ENCODE measurements at regions of chr11 and their contacts with region 1.

Region 1: DNA sequence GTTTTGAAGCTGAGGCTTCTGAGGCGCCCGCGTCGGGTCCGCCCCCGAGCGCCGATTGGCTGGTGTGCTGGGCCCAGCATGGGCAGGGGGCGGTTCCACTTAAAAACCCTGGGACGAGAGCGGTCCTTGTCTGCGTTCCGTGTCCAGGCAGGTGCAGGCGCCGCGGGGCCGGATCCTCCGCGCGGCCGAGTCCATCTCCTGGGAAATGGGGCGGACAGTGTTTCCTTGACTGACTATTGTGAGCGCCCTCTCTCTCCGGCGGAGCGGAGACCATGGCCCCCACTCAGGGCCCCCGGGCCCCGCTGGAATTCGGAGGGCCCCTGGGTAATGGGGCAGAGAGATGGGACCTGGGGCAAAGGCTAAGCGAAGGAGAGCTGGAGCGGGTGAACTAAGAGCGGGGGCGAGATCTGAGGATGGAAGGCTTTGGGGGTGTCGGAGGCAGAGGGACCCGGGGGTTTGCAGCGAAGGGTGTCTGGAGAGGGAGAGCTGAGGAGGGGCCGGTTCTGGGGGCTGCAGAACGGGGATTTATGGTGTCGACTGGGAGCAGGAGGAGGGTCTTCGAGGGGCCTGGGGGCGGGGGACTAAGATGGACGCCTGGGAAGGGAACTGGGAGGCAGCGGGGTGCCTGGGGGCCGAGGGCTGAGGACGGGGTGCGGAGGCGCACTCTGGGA is at the start of gene TM7SF2:
- DNase-seq: peak; percentile 98
- H3K4me3 ChIP-seq: peak within 1 kb of the TSS; percentile 64 to 83
- H3K27ac ChIP-seq: peak within 1 kb of the TSS in 1 of 2 experiments; percentile 89; a peak in 2 of 4 replicates
- H3K4me1 ChIP-seq: peaks cover 14 to 52% of the 10 kb centered on the region in 2 experiments; a peak in 3 of 4 replicates
- H3K27me3 ChIP-seq: no peaks in the 10 kb centered on the region
- CTCF ChIP-seq: no peak
- EP300 ChIP-seq: no peak
- RAD21 ChIP-seq: no peak
- polyA plus RNA-seq, gene TM7SF2: 87.8 and 90.0 TPM in 2 replicates

Region 2: DNA sequence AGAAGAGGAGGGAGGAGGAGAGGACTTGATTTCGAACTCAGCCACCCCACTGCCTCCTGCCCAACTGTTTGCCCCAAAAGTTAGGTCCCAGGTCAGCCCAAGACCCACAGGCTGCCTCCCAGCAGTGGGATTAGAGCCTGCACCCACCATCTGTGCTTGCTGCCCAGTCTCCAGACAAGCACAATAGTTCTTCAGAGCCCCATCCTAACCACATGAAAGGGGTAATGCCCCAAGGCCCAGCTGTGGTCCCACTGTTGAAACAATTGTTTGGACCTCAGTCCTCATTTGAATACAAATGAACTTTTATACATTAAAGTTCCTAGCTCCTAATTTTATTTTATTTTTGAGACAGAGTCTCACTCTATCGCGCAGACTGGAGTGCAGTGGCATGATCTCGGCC is 21.3 kb before region 1 on chr11:
- CTCF ChIA-PET with region 1: interaction called, 150 read pairs
- POLR2A ChIA-PET with region 1: interaction called, 10 read pairs
- DNase-seq: no peak
- H3K4me3 ChIP-seq: no peak overlapping the region
- H3K27ac ChIP-seq: no peak overlapping the region
- H3K4me1 ChIP-seq: peaks cover 0 to 1% of the 10 kb centered on the region in 2 experiments; a peak in 1 of 4 replicates
- H3K27me3 ChIP-seq: no peaks in the 10 kb centered on the region
- CTCF ChIP-seq: no peak
- EP300 ChIP-seq: no peak
- RAD21 ChIP-seq: no peak

Region 3: DNA sequence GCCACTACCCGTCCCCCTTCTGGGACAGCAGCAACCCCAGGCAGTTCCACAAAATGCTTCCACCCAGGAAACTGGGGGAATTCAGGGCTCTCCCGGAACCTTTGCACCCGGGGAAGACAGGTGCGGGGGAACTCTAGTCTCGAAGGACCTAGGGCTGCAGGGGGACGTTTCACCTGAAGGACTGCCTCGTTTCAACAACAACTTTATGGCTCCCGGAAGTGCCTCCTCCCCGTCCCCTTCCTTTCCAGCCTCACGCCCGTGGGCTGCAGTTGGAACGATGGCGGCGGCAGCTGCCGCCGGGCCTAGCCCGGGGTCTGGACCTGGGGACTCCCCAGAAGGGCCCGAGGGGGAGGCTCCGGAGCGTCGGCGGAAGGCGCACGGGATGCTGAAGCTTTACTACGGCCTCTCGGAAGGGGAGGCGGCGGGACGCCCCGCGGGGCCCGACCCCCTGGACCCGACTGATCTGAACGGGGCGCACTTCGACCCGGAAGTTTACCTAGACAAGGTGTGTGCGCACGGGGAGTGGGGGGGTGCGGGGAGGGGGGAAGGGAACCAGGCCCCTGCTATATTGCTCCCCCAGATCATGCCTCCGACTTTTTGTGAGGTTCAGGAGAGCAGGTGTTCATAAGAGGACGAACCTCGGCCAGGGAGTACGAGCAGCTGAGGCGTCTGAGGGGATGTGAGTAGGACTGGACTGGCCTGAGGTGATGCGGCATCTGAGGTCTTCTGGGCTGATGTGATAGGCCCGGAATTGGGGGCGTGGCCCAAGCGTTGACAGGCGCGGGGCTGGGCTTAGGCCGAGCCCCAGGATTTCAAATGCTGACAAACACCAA is 15.7 kb before region 1 on chr11 and contains the start of gene VPS51:
- CTCF ChIA-PET with region 1: interaction called, 150 read pairs
- POLR2A ChIA-PET with region 1: interaction called, 27 read pairs
- DNase-seq: peak; percentile 93
- H3K4me3 ChIP-seq: peak within 1 kb of the TSS; percentile 57 to 77
- H3K27ac ChIP-seq: peak within 1 kb of the TSS; percentile 71 to 74; a peak in 3 of 4 replicates
- H3K4me1 ChIP-seq: peaks cover 0 to 10% of the 10 kb centered on the region in 2 experiments; a peak in 1 of 4 replicates
- H3K27me3 ChIP-seq: no peaks in the 10 kb centered on the region
- CTCF ChIP-seq: no peak
- EP300 ChIP-seq: peak in 1 of 2 experiments; percentile 39; a peak in 1 of 4 replicates
- RAD21 ChIP-seq: no peak
- polyA plus RNA-seq, gene VPS51: 59.1 and 59.9 TPM in 2 replicates

Region 4: DNA sequence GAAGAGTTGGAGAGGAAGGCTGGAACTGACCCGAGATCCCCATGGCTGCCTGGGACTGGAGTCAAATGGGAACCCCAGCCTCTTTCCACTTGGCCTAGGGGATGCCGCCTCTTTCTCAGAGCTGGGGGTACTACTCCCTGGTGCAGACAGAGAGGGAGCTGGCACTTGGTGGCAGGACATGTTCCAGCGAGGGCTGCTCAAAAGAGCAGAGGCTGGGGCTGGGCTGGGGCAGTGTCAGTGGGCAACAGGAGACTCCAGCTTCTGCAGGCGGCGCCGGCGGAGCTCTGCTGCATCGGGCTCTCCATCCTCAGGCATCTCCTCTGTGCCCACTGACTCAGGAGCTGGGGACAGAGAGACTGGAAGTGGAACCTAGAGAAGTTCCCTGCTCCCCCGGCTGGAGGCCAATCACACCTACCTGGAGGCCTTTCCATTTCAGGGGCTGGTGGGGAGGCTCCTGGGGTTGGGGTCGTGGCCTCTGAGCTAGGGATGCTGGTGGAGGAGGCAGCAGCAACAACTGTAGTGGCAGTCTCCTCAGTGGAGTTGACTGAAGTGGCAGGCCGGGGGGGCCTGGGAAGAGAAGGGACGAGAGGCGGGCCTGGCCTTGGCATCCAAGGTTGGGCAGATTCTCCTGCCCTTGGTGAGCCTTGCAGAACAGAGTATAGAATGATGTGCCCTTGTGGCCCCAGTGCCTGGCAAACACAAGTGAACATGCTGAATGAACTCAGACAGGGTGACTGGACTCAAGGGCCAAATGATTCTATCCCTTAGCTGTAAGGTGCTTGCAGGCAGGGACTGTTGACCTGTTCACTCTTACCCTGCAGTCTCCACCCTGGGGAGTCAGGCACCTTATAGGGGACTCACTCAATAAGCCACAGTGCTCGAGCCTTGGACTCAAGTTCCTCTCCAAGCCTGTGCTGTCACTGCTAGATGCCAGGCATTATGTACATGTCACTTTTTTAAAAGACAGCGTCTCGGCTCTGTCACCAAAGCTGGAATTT is 16.6 kb after region 1 on chr11:
- CTCF ChIA-PET with region 1: interaction called, 23 read pairs
- POLR2A ChIA-PET with region 1: interaction called, 4 read pairs
- DNase-seq: no peak
- H3K4me3 ChIP-seq: no peak overlapping the region
- H3K27ac ChIP-seq: no peak overlapping the region
- H3K4me1 ChIP-seq: peaks cover 0 to 15% of the 10 kb centered on the region in 2 experiments; a peak in 2 of 4 replicates
- H3K27me3 ChIP-seq: no peaks in the 10 kb centered on the region
- CTCF ChIP-seq: no peak
- EP300 ChIP-seq: no peak
- RAD21 ChIP-seq: no peak

Region 5: DNA sequence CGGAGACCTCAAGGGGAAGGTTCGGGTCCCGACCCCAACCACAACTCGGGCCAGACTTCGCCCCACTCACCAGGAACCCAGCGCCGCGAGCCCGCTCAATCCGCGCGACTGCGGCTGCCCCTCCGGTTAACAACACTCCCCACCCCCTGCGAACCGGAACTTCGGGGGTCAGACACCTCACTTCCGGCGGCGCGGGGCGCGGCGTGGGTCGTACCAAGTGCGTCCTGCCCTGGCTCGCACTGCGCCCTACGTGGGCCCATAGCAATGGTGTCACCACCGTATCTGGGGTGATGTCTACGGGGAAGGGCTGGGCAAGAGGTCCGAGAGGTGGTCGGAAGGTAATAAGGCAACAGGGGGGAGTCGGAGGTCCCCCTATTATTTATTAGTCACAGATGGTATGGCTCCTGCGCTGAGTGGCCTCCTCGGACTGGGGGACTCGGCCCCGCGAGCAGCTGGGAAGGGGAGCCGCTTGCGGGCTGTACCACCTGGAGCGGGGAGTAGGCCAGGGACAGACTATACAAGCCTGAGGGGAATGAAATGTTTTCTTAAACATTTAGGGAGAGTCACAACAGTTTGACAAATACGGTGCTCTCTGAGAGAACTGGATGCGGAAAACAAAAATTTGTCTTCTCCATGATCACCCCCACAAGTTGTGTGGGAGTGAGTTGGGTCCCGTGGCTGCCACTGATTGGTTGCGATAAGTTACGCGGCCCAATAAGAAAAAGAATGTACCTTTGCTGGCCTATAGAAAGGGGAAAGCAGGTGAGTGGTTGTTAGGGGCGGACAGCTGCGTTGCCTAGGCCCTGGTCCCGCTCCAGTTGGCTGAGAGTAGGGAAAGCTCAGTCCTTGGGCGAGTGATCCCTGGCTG is 22.7 kb after region 1 on chr11 and contains the start of gene SYVN1:
- CTCF ChIA-PET with region 1: interaction called, 27 read pairs
- POLR2A ChIA-PET with region 1: interaction called, 25 read pairs
- DNase-seq: peak; percentile 97
- H3K4me3 ChIP-seq: peak within 1 kb of the TSS; percentile 88 to 96
- H3K27ac ChIP-seq: peak within 1 kb of the TSS; percentile 95 to 99
- H3K4me1 ChIP-seq: peaks cover 0 to 28% of the 10 kb centered on the region in 2 experiments; a peak in 2 of 4 replicates
- H3K27me3 ChIP-seq: no peaks in the 10 kb centered on the region
- CTCF ChIP-seq: no peak
- EP300 ChIP-seq: 0 out of 4 replicates have a peak, but pooled peaks of 1 of the 2 experiments have one; percentile 5
- RAD21 ChIP-seq: no peak
- polyA plus RNA-seq, gene SYVN1: 14.9 and 31.9 TPM in 2 replicates

Region 6: GRCh38 chr11:65180877-65181568 is 69.1 kb after region 1 on chr11:
- CTCF ChIA-PET with region 1: interaction called, 46 read pairs
- POLR2A ChIA-PET with region 1: interaction called, 5 read pairs
- DNase-seq: peak; percentile 96
- H3K4me3 ChIP-seq: peak overlapping the region; percentile 95 to 98
- H3K27ac ChIP-seq: peak overlapping the region in 1 of 2 experiments; percentile 75; a peak in 2 of 4 replicates
- H3K4me1 ChIP-seq: peaks cover 0 to 18% of the 10 kb centered on the region in 2 experiments; a peak in 2 of 4 replicates
- H3K27me3 ChIP-seq: no peaks in the 10 kb centered on the region
- CTCF ChIP-seq: peak; percentile 53
- EP300 ChIP-seq: no peak
- RAD21 ChIP-seq: peak; percentile 62